ENCODE measurements at regions of chr15 and their contacts with region 1.

Region 1: DNA sequence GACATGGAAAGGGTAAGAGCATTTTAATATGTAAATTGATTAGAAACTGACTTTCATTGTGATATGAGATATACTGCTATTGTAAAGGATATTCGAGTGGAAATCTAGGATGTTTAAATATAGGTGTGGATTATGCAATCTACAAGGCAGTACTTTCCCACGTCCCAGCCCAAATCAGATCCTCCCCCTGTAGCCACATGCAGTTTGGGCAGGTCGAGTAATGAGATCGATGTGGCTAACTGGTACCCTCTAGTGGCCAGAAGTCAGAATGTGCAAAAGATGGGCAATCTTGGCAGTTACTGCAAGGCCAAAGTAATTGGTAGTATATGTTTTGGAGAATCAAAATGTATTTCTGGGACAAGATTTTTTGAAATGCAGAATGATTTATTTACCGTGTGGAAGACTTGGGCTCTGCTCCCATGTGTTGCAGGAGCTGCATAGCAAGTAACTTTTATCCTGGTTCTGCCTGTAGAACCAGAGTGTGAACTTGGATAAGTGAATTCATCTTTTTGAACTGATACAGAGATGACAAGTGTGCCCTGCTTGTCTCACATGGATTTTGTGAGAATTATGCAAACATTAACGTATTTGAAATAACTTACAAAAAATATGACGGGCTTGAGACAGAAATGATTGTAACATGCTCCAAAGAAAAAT is 94.5 kb upstream of the ADAMTSL3 start:
- DNase-seq: peak; percentile 65 to 78 (median 72)
- H3K4me3 ChIP-seq: no peak overlapping the region
- H3K27ac ChIP-seq: no peak overlapping the region
- H3K4me1 ChIP-seq: no peaks in the 10 kb centered on the region
- H3K27me3 ChIP-seq: peaks cover 0 to 4% (median 0%) of the 10 kb centered on the region in 5 experiments

Region 2: DNA sequence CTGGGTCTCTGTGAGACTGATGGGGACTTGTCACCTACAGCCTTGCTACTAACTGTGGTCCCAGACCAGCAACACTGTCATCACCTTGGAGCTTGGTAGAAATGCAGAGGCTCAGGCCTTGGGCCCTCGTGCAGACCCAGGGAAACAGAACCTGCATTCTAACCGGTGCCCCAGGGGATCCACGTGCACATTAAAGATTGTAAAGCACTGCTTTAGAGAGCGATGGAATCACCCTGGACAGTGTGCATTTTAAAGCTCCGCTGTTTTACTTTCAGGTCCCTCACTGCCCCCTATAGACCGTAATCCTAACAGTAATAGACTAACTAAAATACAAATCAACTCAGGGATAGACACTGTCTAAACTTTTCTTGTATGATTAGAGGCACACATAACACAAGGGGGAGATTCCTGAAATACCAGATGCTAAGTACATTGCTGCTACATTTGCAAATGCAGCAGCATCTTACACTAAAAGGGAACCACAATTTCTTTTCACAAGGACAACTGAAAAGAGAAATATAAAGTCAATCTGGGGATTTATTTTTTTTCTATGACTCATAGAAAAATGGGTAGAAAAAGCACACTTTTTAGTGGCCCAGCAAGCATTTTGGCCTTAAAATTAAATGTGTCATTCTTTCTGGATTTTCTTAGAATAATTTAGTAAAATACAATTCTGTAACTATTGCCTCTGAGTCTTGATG is 122.8 kb before region 1 on chr15:
- CTCF ChIA-PET with region 1: interaction called, 95 read pairs
- POLR2A ChIA-PET with region 1: no interaction called
- DNase-seq: peak; percentile 40 to 61 (median 60)
- H3K4me3 ChIP-seq: no peak overlapping the region
- H3K27ac ChIP-seq: no peak overlapping the region
- H3K4me1 ChIP-seq: peaks cover 0 to 3% (median 0%) of the 10 kb centered on the region in 4 experiments
- H3K27me3 ChIP-seq: peaks cover 0 to 8% (median 3%) of the 10 kb centered on the region in 5 experiments

Region 3: GRCh38 chr15:83446904-83447709 is 112.3 kb before region 1 on chr15 and contains the start of gene SH3GL3:
- CTCF ChIA-PET with region 1: interaction called, 10 read pairs
- POLR2A ChIA-PET with region 1: interaction called, 3 read pairs
- DNase-seq: peak; percentile 83 to 95 (median 92)
- H3K4me3 ChIP-seq: peak within 1 kb of the TSS; percentile 4 to 79 (median 52)
- H3K27ac ChIP-seq: no peak within 1 kb of the TSS
- H3K4me1 ChIP-seq: peaks cover 0 to 28% (median 17%) of the 10 kb centered on the region in 4 experiments
- H3K27me3 ChIP-seq: peaks cover 2 to 25% (median 16%) of the 10 kb centered on the region in 5 experiments

Measured in common myeloid progenitor, CD34-positive (primary cell).